Caco-2 (cell line): ENCODE measurements at regions of chr4 and their contacts with region 1.

Region 1: GRCh38 chr4:39638354-39639240 is at the start of gene SMIM14:
- DNase-seq: peak; percentile 98 to 99
- H3K4me3 ChIP-seq: peak within 1 kb of the TSS; percentile 94
- H3K4me3 Mint-ChIP-seq: peak within 1 kb of the TSS; percentile 85
- H3K27ac Mint-ChIP-seq: peak within 1 kb of the TSS; percentile 74
- H3K4me1 ChIP-seq: peaks cover 28% of the 10 kb centered on the region
- H3K4me1 Mint-ChIP-seq: peaks cover 15% of the 10 kb centered on the region
- H3K27me3 ChIP-seq: no peaks in the 10 kb centered on the region
- H3K27me3 Mint-ChIP-seq: no peaks in the 10 kb centered on the region
- CTCF ChIP-seq: no peak
- total RNA-seq, gene SMIM14: 37.6 and 41.0 TPM in 2 replicates

Region 2: DNA sequence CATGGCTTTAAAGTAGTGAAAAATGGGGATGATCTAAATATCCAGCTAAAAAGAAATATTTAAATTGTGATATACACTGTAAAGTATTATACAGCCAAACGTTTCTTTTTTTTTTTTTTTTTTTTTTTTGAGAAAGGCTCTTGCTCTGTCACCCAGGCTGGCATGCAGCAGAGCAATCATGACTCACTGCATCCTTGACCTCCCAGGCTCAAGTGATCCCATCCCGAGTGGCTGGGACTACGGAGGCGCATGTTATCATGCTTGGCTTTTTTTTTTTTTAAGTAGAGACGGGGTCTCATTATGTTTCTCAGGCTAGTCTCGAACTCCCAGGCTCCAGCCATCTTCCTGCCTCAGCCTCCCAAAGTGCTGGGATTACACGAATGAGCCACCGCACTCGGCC is 17.0 kb before region 1 on chr4:
- CTCF ChIA-PET with region 1: no interaction called
- POLR2A ChIA-PET with region 1: no interaction called
- intact Hi-C with region 1: loop called (anchors 2 kb)
- DNase-seq: peak in 1 of 2 experiments; percentile 73
- H3K4me3 ChIP-seq: no peak overlapping the region
- H3K4me3 Mint-ChIP-seq: no peak overlapping the region
- H3K27ac Mint-ChIP-seq: peak overlapping the region; percentile 45
- H3K4me1 ChIP-seq: peaks cover 42% of the 10 kb centered on the region
- H3K4me1 Mint-ChIP-seq: peaks cover 9% of the 10 kb centered on the region
- H3K27me3 ChIP-seq: no peaks in the 10 kb centered on the region
- H3K27me3 Mint-ChIP-seq: no peaks in the 10 kb centered on the region
- CTCF ChIP-seq: no peak